ENCODE measurements at regions of chr14 and their contacts with region 1.

Region 1: DNA sequence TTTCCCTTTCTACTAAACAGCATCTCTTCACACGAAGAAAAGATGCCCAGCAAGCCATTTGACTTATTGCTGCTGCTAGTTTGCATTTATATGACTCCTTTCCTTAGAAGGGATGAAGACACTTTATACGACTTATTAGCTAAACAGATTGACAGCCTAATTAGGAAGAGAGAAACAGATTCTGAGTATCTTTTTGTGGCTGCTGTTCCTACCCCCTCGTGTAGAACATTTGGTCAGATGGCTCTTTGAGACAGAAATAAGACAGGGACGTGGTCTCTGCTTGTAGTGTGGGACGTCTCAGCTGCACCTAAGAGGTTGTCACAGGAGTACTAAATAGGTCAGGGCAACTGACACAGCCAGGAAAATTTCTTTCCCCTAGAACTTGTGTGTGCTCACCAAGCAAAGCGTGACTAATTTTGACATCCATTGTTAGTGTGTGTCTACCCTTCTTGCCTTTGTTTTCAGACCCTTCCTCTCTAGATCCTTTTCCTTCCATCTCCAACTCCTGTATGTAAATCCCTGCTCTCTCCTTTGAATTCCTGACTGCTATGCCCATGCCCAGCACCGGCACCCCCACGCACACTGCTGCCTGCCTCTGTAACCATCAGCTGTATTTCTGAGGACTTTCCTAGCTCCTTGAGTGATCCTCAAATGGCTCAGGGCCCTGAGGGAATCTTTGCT is 83.2 kb downstream of the DAD1 start:
- DNase-seq: peak in 1 of 35 experiments; percentile 54
- ATAC-seq: peak; percentile 17 to 55 (median 46)
- H3K4me3 ChIP-seq: peak overlapping the region; percentile 52 to 58
- H3K4me3 Mint-ChIP-seq: peak overlapping the region; percentile 82 to 86 (median 83)
- H3K27ac ChIP-seq: peak overlapping the region; percentile 90
- H3K27ac Mint-ChIP-seq: peak overlapping the region; percentile 95 to 96
- H3K4me1 ChIP-seq: peaks cover 26 to 55% of the 10 kb centered on the region in 2 experiments
- H3K4me1 Mint-ChIP-seq: peaks cover 55 to 84% (median 75%) of the 10 kb centered on the region in 3 donors
- H3K27me3 ChIP-seq: no peaks in the 10 kb centered on the region
- H3K27me3 Mint-ChIP-seq: no peaks in the 10 kb centered on the region

Region 2: DNA sequence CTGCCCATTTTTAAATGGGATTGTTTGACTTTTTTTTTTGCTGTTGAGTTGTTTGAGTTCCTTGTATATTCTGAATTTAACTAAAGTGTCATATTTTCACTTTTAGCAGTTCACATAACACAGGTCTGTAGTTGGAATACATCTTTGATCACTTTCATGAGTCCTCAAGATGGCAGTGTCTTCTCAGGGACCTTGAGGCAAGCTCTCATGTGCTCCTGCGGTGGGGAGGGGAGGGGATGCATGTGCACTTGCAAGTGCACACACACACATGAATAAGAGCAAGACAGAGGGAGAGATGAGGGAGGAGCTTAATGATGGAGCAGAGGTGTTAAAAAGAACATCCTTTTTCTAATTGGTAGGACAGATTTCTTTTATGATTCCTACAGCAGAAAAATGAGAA is 540.8 kb before region 1 on chr14:
- CTCF ChIA-PET with region 1: interaction called in 1 of 2 experiments, 11 read pairs
- POLR2A ChIA-PET with region 1: no interaction called
- DNase-seq: peak in 33 of 35 experiments; percentile 22 to 66 (median 40)
- ATAC-seq: peak; percentile 92 to 98 (median 96)
- H3K4me3 ChIP-seq: peak overlapping the region in 1 of 2 donors; percentile 3
- H3K4me3 Mint-ChIP-seq: peak overlapping the region; percentile 16 to 60 (median 44)
- H3K27ac ChIP-seq: no peak overlapping the region
- H3K27ac Mint-ChIP-seq: peak overlapping the region; percentile 84 to 85
- H3K4me1 ChIP-seq: peaks cover 0 to 16% of the 10 kb centered on the region in 2 experiments
- H3K4me1 Mint-ChIP-seq: peaks cover 23 to 34% (median 26%) of the 10 kb centered on the region in 3 donors
- H3K27me3 ChIP-seq: no peaks in the 10 kb centered on the region
- H3K27me3 Mint-ChIP-seq: peaks cover 0 to 3% of the 10 kb centered on the region in 2 donors

Region 3: DNA sequence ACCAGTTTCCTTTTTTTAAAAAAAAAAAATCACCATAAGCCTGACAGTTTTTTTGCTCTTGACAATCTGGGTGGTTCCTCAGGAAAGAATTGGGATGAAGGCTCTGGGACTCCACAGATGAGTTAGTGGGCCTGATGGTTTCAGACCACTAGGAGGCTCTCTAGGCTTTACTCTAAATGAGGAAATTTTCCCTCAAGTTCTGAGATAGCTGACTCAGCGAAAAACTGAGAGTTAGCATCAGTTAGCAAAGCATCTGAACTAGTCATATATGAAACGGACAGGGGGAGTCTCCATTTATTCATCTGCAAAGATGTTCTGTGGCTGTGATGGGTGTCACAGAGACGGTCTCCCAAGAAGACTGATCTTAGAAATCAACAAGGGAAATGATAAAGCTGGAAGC is 517.9 kb before region 1 on chr14:
- CTCF ChIA-PET with region 1: interaction called in 1 of 2 experiments, 3 read pairs
- POLR2A ChIA-PET with region 1: interaction called in 1 of 2 experiments, 11 read pairs
- DNase-seq: peak in 1 of 35 experiments; percentile 54
- ATAC-seq: peak in 1 of 4 experiments; percentile 51
- H3K4me3 ChIP-seq: no peak overlapping the region
- H3K4me3 Mint-ChIP-seq: peak overlapping the region in 1 of 3 donors; percentile 13
- H3K27ac ChIP-seq: no peak overlapping the region
- H3K27ac Mint-ChIP-seq: peak overlapping the region in 1 of 2 donors; percentile 66
- H3K4me1 ChIP-seq: no peaks in the 10 kb centered on the region
- H3K4me1 Mint-ChIP-seq: peaks cover 5 to 21% (median 6%) of the 10 kb centered on the region in 3 donors
- H3K27me3 ChIP-seq: no peaks in the 10 kb centered on the region
- H3K27me3 Mint-ChIP-seq: peaks cover 0 to 3% of the 10 kb centered on the region in 2 donors

Measured in T-cell (primary cell).